Activated B cell treated with CpG ODN at 0.5 μM for 24 hours (primary cell): ENCODE measurements at regions of chr4 and their contacts with region 1.

Region 1: GRCh38 chr4:83110223-83110945 is 4.1 kb downstream of the PLAC8 start:
- DNase-seq: peak; percentile 82
- ATAC-seq: peak; percentile 76
- H3K4me3 Mint-ChIP-seq: peak overlapping the region; percentile 94
- H3K27ac Mint-ChIP-seq: peak overlapping the region; percentile 99
- H3K4me1 Mint-ChIP-seq: peaks cover 70% of the 10 kb centered on the region
- H3K27me3 Mint-ChIP-seq: no peaks in the 10 kb centered on the region
- CTCF ChIP-seq: no peak

Region 2: GRCh38 chr4:81494031-81494431 is 1616.4 kb before region 1 on chr4:
- CTCF ChIA-PET with region 1: no interaction called
- POLR2A ChIA-PET with region 1: interaction called, 3 read pairs
- intact Hi-C with region 1: loop called (anchors 10 kb)
- DNase-seq: no peak
- ATAC-seq: peak; percentile 33
- H3K4me3 Mint-ChIP-seq: peak overlapping the region; percentile 57
- H3K27ac Mint-ChIP-seq: peak overlapping the region; percentile 82
- H3K4me1 Mint-ChIP-seq: peaks cover 55% of the 10 kb centered on the region
- H3K27me3 Mint-ChIP-seq: no peaks in the 10 kb centered on the region
- CTCF ChIP-seq: no peak

Region 3: DNA sequence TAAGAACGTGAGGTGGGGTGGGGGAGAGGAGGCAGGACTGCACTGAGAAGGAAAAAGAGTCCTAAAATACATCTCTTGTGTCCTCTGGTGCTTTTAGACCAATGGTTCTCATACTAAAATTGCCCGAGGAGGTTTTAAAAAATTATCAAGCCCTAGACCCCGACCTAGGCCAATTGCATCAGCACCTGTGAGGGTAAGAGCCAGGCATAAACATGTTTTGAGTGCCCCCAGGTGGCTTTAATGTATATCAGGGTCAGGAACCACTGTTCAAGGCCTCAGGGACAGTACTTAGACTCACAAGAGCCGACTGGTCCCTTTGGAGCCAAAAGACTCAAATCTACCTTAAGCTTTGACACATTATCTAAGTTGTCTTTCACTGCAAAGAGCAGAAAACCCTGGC is 511.0 kb before region 1 on chr4:
- CTCF ChIA-PET with region 1: no interaction called
- POLR2A ChIA-PET with region 1: no interaction called
- intact Hi-C with region 1: no loop called
- DNase-seq: no peak
- ATAC-seq: no peak
- H3K4me3 Mint-ChIP-seq: no peak overlapping the region
- H3K27ac Mint-ChIP-seq: no peak overlapping the region
- H3K4me1 Mint-ChIP-seq: no peaks in the 10 kb centered on the region
- H3K27me3 Mint-ChIP-seq: peaks cover 12% of the 10 kb centered on the region
- CTCF ChIP-seq: no peak

Region 4: GRCh38 chr4:82842593-82842992 is 267.8 kb before region 1 on chr4:
- CTCF ChIA-PET with region 1: no interaction called
- POLR2A ChIA-PET with region 1: no interaction called
- intact Hi-C with region 1: no loop called
- DNase-seq: no peak
- ATAC-seq: no peak
- H3K4me3 Mint-ChIP-seq: no peak overlapping the region
- H3K27ac Mint-ChIP-seq: no peak overlapping the region
- H3K4me1 Mint-ChIP-seq: no peaks in the 10 kb centered on the region
- H3K27me3 Mint-ChIP-seq: no peaks in the 10 kb centered on the region
- CTCF ChIP-seq: no peak

Region 5: GRCh38 chr4:83034630-83035494 is 75.5 kb before region 1 on chr4 and contains the start of gene COPS4:
- CTCF ChIA-PET with region 1: no interaction called
- POLR2A ChIA-PET with region 1: interaction called, 8 read pairs
- intact Hi-C with region 1: loop called (anchors 2 kb)
- DNase-seq: peak; percentile 82
- ATAC-seq: peak; percentile 96
- H3K4me3 Mint-ChIP-seq: peak within 1 kb of the TSS; percentile 99
- H3K27ac Mint-ChIP-seq: peak within 1 kb of the TSS; percentile 100
- H3K4me1 Mint-ChIP-seq: peaks cover 31% of the 10 kb centered on the region
- H3K27me3 Mint-ChIP-seq: no peaks in the 10 kb centered on the region
- CTCF ChIP-seq: no peak
- total RNA-seq, gene COPS4: 32.7 and 36.7 TPM in 2 replicates

Region 6: DNA sequence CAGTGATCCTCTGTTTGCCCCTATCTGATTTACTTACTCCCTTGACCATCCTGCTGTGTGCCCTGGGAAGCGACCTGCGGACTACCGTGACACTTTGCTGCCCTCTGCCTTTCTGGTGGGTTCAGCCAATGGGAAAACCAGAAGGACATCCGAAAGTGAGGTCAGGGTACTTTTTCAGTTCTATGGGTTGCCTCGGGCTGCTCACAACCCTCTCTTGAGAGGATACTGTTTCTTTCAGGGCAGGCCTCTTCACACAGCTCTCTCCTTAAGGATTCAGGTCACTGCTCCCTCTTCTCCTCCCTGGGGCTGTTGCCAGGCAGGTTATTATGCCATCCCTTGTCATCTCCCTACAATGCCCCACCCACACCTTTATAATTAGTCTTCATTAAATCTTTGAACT is 17.3 kb before region 1 on chr4:
- CTCF ChIA-PET with region 1: interaction called, 21 read pairs
- POLR2A ChIA-PET with region 1: interaction called, 17 read pairs
- intact Hi-C with region 1: loop called (anchors 2 kb)
- DNase-seq: no peak
- ATAC-seq: no peak
- H3K4me3 Mint-ChIP-seq: no peak overlapping the region
- H3K27ac Mint-ChIP-seq: peak overlapping the region; percentile 76
- H3K4me1 Mint-ChIP-seq: peaks cover 32% of the 10 kb centered on the region
- H3K27me3 Mint-ChIP-seq: no peaks in the 10 kb centered on the region
- CTCF ChIP-seq: no peak

Region 7: GRCh38 chr4:83138946-83139345 is 28.6 kb after region 1 on chr4:
- CTCF ChIA-PET with region 1: interaction called, 9 read pairs
- POLR2A ChIA-PET with region 1: interaction called, 7 read pairs
- intact Hi-C with region 1: loop called (anchors 2 kb)
- DNase-seq: no peak
- ATAC-seq: peak; percentile 84
- H3K4me3 Mint-ChIP-seq: peak overlapping the region; percentile 21
- H3K27ac Mint-ChIP-seq: peak overlapping the region; percentile 73
- H3K4me1 Mint-ChIP-seq: peaks cover 60% of the 10 kb centered on the region
- H3K27me3 Mint-ChIP-seq: no peaks in the 10 kb centered on the region
- CTCF ChIP-seq: no peak

Region 8: GRCh38 chr4:83212041-83212851 is 101.9 kb after region 1 on chr4:
- CTCF ChIA-PET with region 1: interaction called, 10 read pairs
- POLR2A ChIA-PET with region 1: interaction called, 81 read pairs
- intact Hi-C with region 1: loop called (anchors 1 kb)
- DNase-seq: no peak
- ATAC-seq: peak; percentile 71
- H3K4me3 Mint-ChIP-seq: peak overlapping the region; percentile 39
- H3K27ac Mint-ChIP-seq: peak overlapping the region; percentile 78
- H3K4me1 Mint-ChIP-seq: peaks cover 86% of the 10 kb centered on the region
- H3K27me3 Mint-ChIP-seq: no peaks in the 10 kb centered on the region
- CTCF ChIP-seq: no peak

Region 9: DNA sequence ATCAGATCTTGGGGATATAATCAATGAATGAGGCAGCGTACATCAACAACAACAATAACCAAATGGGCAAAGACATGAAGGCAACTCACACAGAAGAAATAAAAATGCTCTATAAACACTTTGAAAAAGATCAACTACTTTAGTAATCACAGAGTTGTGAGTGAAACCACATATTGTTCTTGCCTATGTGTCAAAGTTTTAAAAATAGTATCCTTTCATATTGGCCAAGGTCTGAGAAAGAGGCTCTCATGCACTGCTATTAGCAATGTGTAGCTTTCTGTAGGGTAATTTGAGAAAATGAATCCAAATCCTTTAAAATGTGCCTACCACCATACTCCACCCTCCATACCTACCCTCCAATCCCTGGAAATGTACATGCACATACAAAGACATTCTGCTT is 149.2 kb after region 1 on chr4:
- CTCF ChIA-PET with region 1: interaction called, 38 read pairs
- POLR2A ChIA-PET with region 1: interaction called, 16 read pairs
- intact Hi-C with region 1: loop called (anchors 1 kb)
- DNase-seq: no peak
- ATAC-seq: no peak
- H3K4me3 Mint-ChIP-seq: peak overlapping the region; percentile 3
- H3K27ac Mint-ChIP-seq: peak overlapping the region; percentile 37
- H3K4me1 Mint-ChIP-seq: peaks cover 53% of the 10 kb centered on the region
- H3K27me3 Mint-ChIP-seq: no peaks in the 10 kb centered on the region
- CTCF ChIP-seq: no peak

Region 10: GRCh38 chr4:84726356-84726755 is 1616.0 kb after region 1 on chr4:
- CTCF ChIA-PET with region 1: no interaction called
- POLR2A ChIA-PET with region 1: no interaction called
- intact Hi-C with region 1: no loop called
- DNase-seq: no peak
- ATAC-seq: no peak
- H3K4me3 Mint-ChIP-seq: no peak overlapping the region
- H3K27ac Mint-ChIP-seq: no peak overlapping the region
- H3K4me1 Mint-ChIP-seq: no peaks in the 10 kb centered on the region
- H3K27me3 Mint-ChIP-seq: no peaks in the 10 kb centered on the region
- CTCF ChIP-seq: no peak